HepG2 (cell line): ENCODE measurements at regions of chr20 and their contacts with region 1.

Region 1: DNA sequence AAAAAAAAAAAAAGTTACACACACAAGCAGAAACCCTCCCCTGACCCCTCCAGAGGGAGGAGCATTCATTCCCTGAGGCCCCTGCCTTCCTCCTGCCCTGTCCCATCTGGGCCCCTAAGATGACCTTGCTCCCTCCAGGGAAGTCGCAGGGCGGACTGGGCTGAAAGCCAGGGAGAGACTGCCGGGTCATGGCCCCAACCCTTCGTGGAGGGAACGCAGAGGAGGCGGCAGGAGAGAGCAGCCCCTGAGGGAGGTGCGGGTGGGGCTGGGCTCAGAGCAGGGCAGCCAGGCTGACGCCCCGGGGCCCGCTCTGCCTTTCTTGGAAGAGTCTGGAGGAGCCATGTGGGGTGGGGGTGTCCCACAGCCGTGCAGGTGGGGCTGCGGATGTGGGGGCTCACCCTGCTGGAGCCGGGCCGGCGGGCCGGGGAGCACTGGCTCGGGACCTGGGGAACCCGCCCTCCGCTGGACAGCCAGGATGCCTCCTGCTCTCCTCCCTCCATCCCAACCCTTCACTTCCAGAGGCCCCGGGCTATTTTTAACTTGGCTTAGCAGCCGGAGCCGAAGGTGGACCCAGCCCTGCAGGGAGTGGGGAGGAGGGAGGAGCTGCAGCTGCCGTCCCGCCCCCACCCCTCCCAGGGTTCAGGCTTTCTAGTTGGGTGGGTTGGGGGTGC is 15.0 kb upstream of the ABHD16B start:
- DNase-seq: peak; percentile 75
- ATAC-seq: peak; percentile 51
- H3K4me3 ChIP-seq: peak overlapping the region; percentile 35 to 67 (median 43); a peak in 5 of 6 replicates
- H3K27ac ChIP-seq: no peak overlapping the region
- H3K4me1 ChIP-seq: peaks cover 41% of the 10 kb centered on the region
- H3K27me3 ChIP-seq: peaks cover 12 to 40% of the 10 kb centered on the region in 2 experiments
- CTCF ChIP-seq: peak; percentile 30
- EP300 ChIP-seq: peak in 1 of 2 experiments; percentile 59; a peak in 1 of 4 replicates
- POLR2A ChIP-seq: no peak
- RAD21 ChIP-seq: no peak

Region 2: GRCh38 chr20:63394069-63394919 is 452.0 kb before region 1 on chr20:
- CTCF ChIA-PET with region 1: no interaction called
- POLR2A ChIA-PET with region 1: no interaction called
- in situ Hi-C with region 1: no loop called
- intact Hi-C with region 1: no loop called
- DNase-seq: no peak
- ATAC-seq: no peak
- H3K4me3 ChIP-seq: no peak overlapping the region
- H3K27ac ChIP-seq: no peak overlapping the region
- H3K4me1 ChIP-seq: no peaks in the 10 kb centered on the region
- H3K27me3 ChIP-seq: peaks cover 38 to 76% of the 10 kb centered on the region in 2 experiments
- CTCF ChIP-seq: no peak
- EP300 ChIP-seq: no peak
- POLR2A ChIP-seq: no peak
- RAD21 ChIP-seq: no peak

Region 3: DNA sequence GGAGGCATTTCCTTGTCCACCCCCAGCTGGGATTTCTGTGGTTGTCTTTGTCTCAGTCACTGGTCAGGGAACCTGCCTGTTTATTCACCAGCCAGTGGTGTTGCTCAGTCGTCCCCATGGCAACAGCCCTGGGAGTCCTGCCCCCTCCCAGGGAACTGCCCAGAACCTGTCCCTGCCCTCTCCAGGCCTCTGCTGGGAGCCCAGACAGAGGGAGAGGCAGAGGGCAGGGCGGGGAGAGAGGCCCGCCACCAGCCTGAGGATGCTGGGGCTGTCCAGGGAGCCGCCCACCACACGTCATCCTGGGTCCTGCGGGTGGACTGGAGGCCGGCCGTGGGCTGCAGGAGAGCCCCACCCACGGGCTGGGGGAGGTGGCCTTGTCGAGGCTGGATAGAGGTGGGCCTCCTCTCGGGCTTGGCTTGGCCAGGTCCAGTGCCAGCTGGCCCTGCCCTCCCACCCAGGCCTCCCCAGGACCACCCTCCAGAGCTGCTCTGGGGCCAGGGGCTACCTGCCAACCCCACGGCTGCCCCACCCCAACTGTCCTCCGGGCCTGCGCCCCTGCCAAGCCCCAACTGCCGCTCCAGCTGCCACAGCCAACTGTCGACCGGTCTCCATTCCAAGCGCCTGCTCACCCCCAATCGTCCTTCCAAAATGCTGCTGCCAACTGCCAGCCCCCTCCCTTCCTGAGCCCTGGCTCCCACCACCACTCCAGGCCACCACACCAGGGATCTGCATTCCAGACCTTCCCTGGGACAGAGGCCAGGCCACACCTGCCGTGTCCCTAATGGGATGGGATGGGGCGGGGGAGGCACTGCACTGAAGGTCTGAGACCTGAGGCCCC is 11.0 kb before region 1 on chr20:
- CTCF ChIA-PET with region 1: interaction called, 3 read pairs
- POLR2A ChIA-PET with region 1: interaction called, 6 read pairs
- in situ Hi-C with region 1: no loop called
- intact Hi-C with region 1: loop called (anchors 1 kb)
- DNase-seq: peak; percentile 96
- ATAC-seq: peak; percentile 81
- H3K4me3 ChIP-seq: peak overlapping the region in 1 of 3 experiments; percentile 41; a peak in 1 of 6 replicates
- H3K27ac ChIP-seq: no peak overlapping the region
- H3K4me1 ChIP-seq: peaks cover 60% of the 10 kb centered on the region
- H3K27me3 ChIP-seq: peaks cover 20 to 49% of the 10 kb centered on the region in 2 experiments
- CTCF ChIP-seq: no peak
- EP300 ChIP-seq: no peak
- POLR2A ChIP-seq: no peak
- RAD21 ChIP-seq: 0 out of 2 replicates have a peak, but pooled peaks have one; percentile 33